Activated T-helper 1 cell treated with anti-CD3 and anti-CD28 coated beads, Interleukin-12 subunit alpha, Interleukin-12 subunit beta, Interleukin-2, Interleukin-4 antibody, amounts not matched to agents 30 ng/mL and 10 ng/mL and 1 ng/mL, durations not matched to agents 14 hours and 24 hours and 36 hours (primary cell): ENCODE measurements at regions of chr5 and their contacts with region 1.

Region 1: DNA sequence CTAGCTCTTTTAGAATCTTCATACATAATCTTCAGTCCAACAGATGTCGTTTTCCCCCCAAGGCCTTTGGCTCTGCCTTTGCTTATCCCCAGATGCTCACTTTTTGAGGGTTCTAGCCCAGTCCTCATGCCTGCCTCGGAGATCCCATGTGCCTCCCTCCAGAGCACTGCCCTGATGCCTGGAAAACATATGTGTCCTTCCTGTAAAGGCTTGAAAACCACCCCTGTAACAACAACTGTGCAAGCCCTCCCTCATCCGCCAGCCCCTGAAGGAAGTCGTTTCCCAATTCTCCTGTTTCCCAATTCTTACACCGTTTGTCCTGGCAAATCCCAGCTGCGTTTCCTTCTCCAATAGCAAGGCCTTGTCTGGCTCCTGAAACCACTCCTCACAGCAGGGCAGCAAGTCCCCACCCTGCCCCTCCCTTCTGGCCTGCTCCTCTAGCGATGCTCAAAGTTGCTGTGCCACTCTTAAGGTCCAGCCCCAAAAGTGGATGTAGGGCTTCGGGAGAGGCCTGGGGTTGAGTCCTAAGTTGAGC is 52.2 kb downstream of the SLC36A1 start:
- DNase-seq: no peak
- H3K4me3 Mint-ChIP-seq: no peak overlapping the region
- H3K27ac Mint-ChIP-seq: no peak overlapping the region
- H3K4me1 Mint-ChIP-seq: peaks cover 6% of the 10 kb centered on the region
- H3K27me3 Mint-ChIP-seq: no peaks in the 10 kb centered on the region

Region 2: GRCh38 chr5:151315998-151316597 is 183.5 kb before region 1 on chr5:
- intact Hi-C with region 1: loop called (anchors 5 kb)
- DNase-seq: peak; percentile 17
- H3K4me3 Mint-ChIP-seq: no peak overlapping the region
- H3K27ac Mint-ChIP-seq: no peak overlapping the region
- H3K4me1 Mint-ChIP-seq: no peaks in the 10 kb centered on the region
- H3K27me3 Mint-ChIP-seq: peaks cover 10% of the 10 kb centered on the region

Region 3: DNA sequence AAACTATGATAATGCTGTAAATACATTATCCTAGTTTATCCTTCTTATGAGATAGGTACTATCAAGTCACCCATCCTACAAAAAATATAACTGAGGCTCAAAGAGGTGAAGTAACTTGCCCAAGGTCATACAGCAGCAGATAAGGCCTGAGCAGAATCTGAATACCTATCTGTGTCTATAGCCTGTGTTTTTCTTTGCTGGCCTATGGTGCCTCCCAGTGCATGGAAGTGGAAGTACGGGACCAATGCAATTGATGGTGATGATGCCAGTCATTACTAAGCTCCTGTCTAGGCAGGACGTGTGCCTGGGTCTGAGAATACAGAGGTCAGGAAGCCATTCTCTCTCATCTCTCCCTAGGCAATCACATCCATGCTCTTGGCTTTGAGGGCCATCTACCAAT is 23.8 kb after region 1 on chr5:
- intact Hi-C with region 1: loop called (anchors 1 kb)
- DNase-seq: peak; percentile 15
- H3K4me3 Mint-ChIP-seq: no peak overlapping the region
- H3K27ac Mint-ChIP-seq: no peak overlapping the region
- H3K4me1 Mint-ChIP-seq: no peaks in the 10 kb centered on the region
- H3K27me3 Mint-ChIP-seq: peaks cover 2% of the 10 kb centered on the region

Region 4: DNA sequence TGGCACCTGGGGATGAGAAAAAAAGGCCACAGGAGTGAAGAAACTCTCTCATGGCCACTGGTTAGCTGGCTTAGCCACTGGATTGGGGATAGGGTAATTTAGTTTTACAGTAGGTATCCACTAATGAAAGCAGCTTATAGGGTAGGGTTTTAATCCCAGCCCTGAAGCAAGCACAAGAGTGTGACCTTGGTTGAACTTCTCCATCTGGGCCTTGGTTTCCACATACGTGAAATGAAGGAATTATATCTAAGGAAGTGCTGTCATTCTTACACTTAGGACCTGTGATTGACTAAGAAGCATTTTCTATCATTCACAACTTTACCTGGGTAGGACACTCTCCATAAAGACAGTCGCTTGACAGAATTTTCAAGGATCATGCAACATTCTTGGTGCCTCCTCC is 42.0 kb after region 1 on chr5:
- intact Hi-C with region 1: no loop called
- DNase-seq: no peak
- H3K4me3 Mint-ChIP-seq: no peak overlapping the region
- H3K27ac Mint-ChIP-seq: no peak overlapping the region
- H3K4me1 Mint-ChIP-seq: no peaks in the 10 kb centered on the region
- H3K27me3 Mint-ChIP-seq: peaks cover 2% of the 10 kb centered on the region

Region 5: GRCh38 chr5:151651997-151652645 is 152.6 kb after region 1 on chr5:
- intact Hi-C with region 1: loop called (anchors 1 kb)
- DNase-seq: peak; percentile 46
- H3K4me3 Mint-ChIP-seq: no peak overlapping the region
- H3K27ac Mint-ChIP-seq: no peak overlapping the region
- H3K4me1 Mint-ChIP-seq: no peaks in the 10 kb centered on the region
- H3K27me3 Mint-ChIP-seq: peaks cover 11% of the 10 kb centered on the region